Kidney (tissue), 22 donors: ENCODE measurements at regions of chr2 and their contacts with region 1.

Region 1: DNA sequence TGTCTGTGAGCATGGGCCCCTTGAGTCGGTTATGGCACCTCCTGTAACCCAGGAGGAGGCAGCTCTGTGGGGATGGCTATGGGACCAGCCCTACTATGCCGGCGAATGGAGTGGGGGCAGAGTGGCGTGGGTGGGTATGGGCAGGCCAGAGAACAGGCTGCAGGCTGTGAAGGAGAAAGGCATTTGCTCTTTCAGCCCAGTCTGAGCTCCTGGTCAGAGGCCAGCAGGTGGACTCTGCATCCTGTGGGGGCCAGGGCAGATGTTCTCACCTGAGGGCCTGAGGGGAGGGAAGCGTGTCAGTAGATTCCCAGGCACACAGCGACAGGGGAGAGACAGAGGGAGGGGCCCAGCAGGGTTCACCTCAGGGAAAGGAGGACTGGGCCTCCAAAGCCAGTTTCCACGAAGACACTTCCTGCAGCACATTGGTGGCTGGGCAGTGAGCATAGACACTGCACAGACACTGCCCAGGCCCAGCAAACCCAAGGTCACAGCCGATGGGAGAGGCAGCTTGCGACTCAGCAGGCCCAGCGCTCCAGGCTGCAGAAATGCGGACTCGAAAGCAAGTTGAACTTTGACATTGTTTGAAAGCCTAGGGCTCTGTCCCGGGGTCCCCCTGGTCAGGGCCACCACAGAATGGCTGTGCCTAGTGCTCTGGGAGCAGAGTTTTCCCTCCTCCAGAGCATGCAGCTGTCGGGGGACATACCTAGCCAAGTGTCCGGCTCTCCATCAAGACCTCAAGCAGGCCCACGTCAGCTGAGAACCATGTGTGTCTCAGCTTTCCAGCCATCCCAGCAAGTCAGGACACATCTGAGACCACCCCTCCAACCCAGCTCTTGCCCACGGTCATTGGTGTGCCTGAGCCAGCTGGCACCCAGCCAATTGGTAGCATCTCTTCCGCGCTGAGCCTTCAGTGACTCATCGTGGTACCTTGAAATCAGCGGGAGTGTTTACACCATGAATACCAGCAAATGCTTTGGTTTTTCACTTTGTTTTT is 53.8 kb downstream of the TGOLN2 start:
- DNase-seq: no peak
- H3K4me3 ChIP-seq: no peak overlapping the region
- H3K27ac ChIP-seq: no peak overlapping the region
- H3K4me1 ChIP-seq: peaks cover 0 to 31% (median 8%) of the 10 kb centered on the region in 3 donors
- H3K27me3 ChIP-seq: no peaks in the 10 kb centered on the region
- CTCF ChIP-seq: no peak

Region 2: DNA sequence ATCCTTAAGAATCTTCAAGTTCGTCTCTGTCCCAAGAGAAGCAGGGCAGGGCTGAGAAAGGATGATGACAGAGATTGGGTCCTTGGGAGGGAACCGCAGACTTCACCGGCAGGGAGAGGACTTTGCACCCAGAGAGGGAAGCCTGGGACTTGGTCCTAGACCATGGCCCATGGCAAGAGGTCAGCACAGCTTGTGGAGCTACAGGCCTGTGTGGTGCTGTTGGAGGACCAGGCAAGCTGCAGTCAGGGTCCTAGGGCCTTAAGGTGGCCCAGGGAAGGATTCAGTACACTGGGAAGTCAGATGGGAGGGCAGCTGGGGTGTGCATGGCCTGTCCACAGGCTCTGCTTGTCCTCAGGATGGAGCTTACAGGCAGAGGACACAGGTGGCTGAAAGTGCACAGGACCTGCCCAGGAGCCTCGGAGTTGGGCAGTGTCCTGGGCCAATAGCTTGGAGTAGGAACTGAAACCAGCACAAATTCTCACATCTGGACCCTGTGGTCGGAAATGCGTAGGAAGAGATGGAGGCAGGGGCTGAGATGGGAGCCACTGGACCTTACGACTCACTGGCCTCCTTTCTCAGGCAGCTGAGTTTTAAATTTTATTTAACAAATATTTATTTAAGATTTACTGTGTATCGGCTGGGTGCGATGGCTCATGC is 197.3 kb before region 1 on chr2:
- intact Hi-C with region 1: no loop called
- DNase-seq: no peak
- H3K4me3 ChIP-seq: no peak overlapping the region
- H3K27ac ChIP-seq: no peak overlapping the region
- H3K4me1 ChIP-seq: no peaks in the 10 kb centered on the region
- H3K27me3 ChIP-seq: no peaks in the 10 kb centered on the region
- CTCF ChIP-seq: no peak

Region 3: GRCh38 chr2:85132834-85133637 is 141.0 kb before region 1 on chr2 and contains the start of gene TCF7L1:
- intact Hi-C with region 1: loop called (anchors 10 kb)
- DNase-seq: peak; percentile 94 to 97 (median 95)
- H3K4me3 ChIP-seq: peak within 1 kb of the TSS; percentile 63 to 77 (median 73)
- H3K27ac ChIP-seq: peak within 1 kb of the TSS; percentile 72 to 77
- H3K4me1 ChIP-seq: peaks cover 0 to 7% (median 7%) of the 10 kb centered on the region in 3 donors
- H3K27me3 ChIP-seq: no peaks in the 10 kb centered on the region
- CTCF ChIP-seq: peak; percentile 60
- total RNA-seq, gene TCF7L1: 12.5 TPM